ENCODE measurements at regions of chr11 and their contacts with region 1.

Region 1: DNA sequence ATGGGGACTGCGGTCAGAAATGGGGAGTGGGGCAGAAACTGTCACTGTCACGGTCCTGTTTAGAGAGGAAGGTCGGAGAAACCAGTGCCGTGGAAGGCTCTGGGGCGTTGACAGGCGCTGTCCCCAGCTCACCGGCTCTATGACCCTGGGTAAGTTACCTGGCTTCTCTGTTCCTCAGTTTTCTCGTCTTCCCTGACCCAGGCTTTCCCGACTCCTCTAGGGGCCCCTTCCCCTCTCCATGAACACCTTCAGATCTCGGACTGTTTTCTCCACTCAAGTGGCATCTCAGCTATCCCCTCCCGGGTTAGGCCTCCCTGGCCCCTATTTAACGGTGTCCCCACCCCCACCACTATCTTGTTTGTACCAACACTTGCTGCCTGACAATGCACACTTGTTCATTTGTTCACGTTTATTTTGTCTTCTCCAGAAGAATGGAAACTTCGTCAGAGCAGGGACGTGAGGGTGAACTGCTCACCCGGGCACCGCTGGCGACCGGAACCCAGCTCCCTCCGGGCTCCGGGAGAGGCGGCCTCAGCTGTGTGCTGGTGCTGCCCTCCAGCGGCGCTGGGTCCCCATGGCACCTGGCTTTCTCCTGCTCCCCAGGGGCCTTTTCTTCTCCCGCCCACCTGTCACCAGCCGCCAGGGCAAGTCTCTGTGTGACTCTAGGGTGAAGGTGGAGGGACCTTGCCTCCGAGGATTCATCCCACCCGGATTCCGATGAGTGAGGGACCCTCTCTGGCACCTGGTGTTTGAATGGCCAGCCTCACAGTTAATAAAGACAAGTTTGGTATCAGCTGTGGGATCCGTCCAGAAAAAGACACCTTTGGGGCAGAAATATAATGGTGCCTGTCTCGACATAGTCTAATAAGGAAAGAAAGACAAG is 33.1 kb upstream of the SLC35C1 start:
- DNase-seq: peak in 1 of 2 experiments; percentile 94
- H3K4me3 ChIP-seq: peak overlapping the region; percentile 18 to 62 (median 56); a peak in 7 of 8 replicates
- H3K27ac ChIP-seq: no peak overlapping the region
- H3K4me1 ChIP-seq: no peaks in the 10 kb centered on the region; a peak in 1 of 7 replicates
- H3K27me3 ChIP-seq: peaks cover 0 to 6% (median 5%) of the 10 kb centered on the region in 4 experiments; a peak in 6 of 7 replicates
- CTCF ChIP-seq: peak; percentile 86 to 95 (median 91)
- EP300 ChIP-seq: no peak
- POLR2A ChIP-seq: no peak
- RAD21 ChIP-seq: peak; percentile 96 to 98

Region 2: GRCh38 chr11:45371251-45372115 is 400.3 kb before region 1 on chr11:
- CTCF ChIA-PET with region 1: interaction called, 52 read pairs
- POLR2A ChIA-PET with region 1: no interaction called
- DNase-seq: peak; percentile 82 to 96
- H3K4me3 ChIP-seq: peak overlapping the region; percentile 2 to 57 (median 44); a peak in 5 of 8 replicates
- H3K27ac ChIP-seq: no peak overlapping the region
- H3K4me1 ChIP-seq: peaks cover 0 to 5% (median 4%) of the 10 kb centered on the region in 4 experiments
- H3K27me3 ChIP-seq: peaks cover 0 to 3% (median 0%) of the 10 kb centered on the region in 4 experiments; a peak in 5 of 7 replicates
- CTCF ChIP-seq: peak; percentile 88 to 99 (median 91)
- EP300 ChIP-seq: no peak
- POLR2A ChIP-seq: no peak
- RAD21 ChIP-seq: peak; percentile 95 to 96

Region 3: DNA sequence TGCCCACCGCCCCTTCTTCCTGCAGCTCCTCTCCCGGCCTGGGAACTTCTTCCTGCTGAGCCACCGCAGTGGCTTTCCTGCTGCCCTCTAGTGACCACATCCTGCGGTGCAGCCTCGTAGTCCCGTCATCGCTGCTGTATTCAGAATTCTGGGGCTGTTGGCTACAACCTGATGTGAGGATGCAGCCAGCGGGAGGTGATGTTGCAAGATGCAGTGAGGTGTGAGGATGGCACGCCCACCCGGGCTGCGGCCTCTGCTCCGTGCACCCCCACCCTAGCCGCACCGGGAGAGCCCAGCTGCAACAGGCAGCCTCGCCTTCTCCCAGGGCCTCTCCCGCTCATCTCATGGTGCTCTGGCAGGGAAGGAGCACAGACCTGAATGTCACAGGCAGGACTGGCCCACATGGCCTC is 116.5 kb before region 1 on chr11:
- CTCF ChIA-PET with region 1: interaction called, 89 read pairs
- POLR2A ChIA-PET with region 1: no interaction called
- DNase-seq: peak; percentile 75 to 98
- H3K4me3 ChIP-seq: no peak overlapping the region
- H3K27ac ChIP-seq: no peak overlapping the region
- H3K4me1 ChIP-seq: peaks cover 3 to 21% (median 11%) of the 10 kb centered on the region in 4 experiments
- H3K27me3 ChIP-seq: no peaks in the 10 kb centered on the region; a peak in 1 of 7 replicates
- CTCF ChIP-seq: peak; percentile 92 to 98 (median 97)
- EP300 ChIP-seq: peak; percentile 12 to 25; a peak in 1 of 3 replicates
- POLR2A ChIP-seq: no peak
- RAD21 ChIP-seq: peak; percentile 88 to 93

Region 4: DNA sequence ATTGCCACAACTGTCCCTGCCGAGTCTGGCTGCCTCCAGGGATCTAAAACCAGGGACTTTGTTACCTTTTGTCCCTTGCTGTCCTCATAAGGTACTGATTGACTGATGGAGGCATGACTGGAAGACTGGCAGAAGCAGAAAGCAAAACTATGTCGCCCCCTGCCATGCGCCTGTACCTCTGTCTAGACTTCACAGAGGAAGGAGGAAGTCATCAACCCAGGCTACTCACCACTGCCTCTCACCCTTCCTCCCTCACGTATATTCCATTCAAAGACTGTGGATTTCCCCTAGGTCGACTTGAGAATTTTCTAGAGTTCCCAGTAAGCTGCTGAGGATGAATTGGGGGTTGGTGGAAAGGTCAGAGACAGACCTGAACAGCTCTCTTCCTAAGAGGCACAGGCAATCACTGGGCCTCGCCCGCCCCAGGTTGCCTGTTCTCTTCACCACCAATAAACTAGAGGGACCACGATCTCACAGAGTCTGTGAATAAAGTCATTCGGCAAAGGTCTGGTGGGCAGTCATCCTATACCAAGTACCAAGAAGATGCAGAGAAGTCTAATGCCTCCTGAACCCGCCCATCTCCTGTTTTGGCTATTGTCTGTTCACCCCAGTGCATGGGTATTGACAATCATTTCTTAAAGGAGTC is 78.9 kb before region 1 on chr11:
- CTCF ChIA-PET with region 1: interaction called, 13 read pairs
- POLR2A ChIA-PET with region 1: no interaction called
- DNase-seq: no peak
- H3K4me3 ChIP-seq: no peak overlapping the region
- H3K27ac ChIP-seq: no peak overlapping the region
- H3K4me1 ChIP-seq: no peaks in the 10 kb centered on the region; a peak in 1 of 7 replicates
- H3K27me3 ChIP-seq: peaks cover 0 to 5% (median 0%) of the 10 kb centered on the region in 4 experiments; a peak in 1 of 7 replicates
- CTCF ChIP-seq: no peak
- EP300 ChIP-seq: no peak
- POLR2A ChIP-seq: no peak
- RAD21 ChIP-seq: no peak

Region 5: GRCh38 chr11:45754261-45754709 is 17.5 kb before region 1 on chr11:
- CTCF ChIA-PET with region 1: interaction called, 85 read pairs
- POLR2A ChIA-PET with region 1: interaction called, 4 read pairs
- DNase-seq: no peak
- H3K4me3 ChIP-seq: no peak overlapping the region
- H3K27ac ChIP-seq: no peak overlapping the region
- H3K4me1 ChIP-seq: peaks cover 0 to 6% (median under 1%) of the 10 kb centered on the region in 4 experiments; a peak in 5 of 7 replicates
- H3K27me3 ChIP-seq: no peaks in the 10 kb centered on the region; a peak in 1 of 7 replicates
- CTCF ChIP-seq: no peak
- EP300 ChIP-seq: no peak
- POLR2A ChIP-seq: no peak
- RAD21 ChIP-seq: no peak